ENCODE measurements at regions of chr11 and their contacts with region 1.

Region 1: DNA sequence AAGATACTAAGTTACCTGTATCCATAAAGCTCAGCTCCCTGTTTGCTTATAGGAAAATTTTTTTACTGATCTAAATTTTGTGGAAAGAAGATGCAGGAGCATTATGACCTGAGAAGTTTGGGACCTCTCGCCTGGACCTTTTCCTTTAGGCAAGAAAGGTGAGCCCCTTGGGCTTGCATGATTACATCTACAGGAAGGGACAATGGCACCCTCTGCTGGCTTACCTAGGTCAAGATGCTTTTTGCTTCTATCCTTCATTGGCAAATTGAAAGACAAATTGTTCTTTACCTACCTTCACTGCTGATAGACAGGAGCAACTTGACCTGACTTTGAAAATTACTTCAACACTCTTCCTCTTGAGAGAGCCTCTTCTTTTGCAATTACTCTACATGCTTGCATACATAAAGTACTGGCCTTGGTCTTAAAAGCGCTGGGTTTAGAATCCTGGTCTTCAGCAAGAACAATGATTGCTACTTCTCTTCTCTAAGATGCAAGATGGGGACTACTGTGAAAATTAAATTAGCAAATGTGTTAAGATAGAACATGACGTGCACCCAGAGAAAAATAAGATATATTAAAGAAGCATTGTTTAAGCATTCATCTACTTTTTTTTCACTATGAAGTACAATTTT is 147.2 kb downstream of the TRPC6 start:
- DNase-seq: no peak
- ATAC-seq: no peak

Region 2: DNA sequence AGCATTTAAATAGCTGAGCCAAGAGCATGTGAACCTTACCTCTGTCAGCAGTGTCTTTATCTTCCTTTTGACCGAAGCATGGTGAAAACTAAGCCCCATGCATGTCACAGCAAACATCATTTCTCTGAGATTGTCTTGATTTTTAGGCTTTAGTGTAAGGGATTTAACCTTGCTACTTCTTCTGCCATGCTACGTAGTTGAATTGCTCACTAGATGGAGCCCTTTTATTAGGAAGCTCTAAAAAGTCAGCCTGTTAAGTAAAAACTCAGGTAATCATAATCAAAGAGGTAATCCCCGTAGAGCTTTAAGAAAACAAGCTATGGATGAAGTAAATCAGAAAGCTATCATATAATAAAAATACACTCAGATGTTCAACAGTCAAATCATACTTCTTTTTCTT is 456.5 kb before region 1 on chr11:
- intact Hi-C with region 1: loop called (anchors 5 kb)
- DNase-seq: no peak
- ATAC-seq: no peak

Region 3: DNA sequence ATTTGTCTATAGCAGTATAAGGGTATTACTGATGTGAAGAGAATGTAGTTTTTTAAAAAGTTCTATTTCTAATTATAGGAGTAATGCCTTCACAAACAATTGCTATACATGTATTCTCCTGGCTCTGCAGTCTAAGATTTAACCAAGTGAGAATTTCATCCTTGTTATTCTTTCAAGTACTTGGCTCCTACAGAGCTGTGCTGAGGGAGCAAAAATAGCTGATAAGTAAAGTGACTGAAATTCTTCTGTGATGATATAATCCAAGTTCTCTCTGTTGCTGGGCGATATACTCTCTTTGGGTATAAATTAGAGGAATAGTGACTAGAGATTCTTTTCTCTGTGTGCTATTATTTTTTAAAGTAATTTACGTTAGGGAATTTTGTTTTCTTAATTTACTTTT is 375.0 kb before region 1 on chr11:
- intact Hi-C with region 1: no loop called
- DNase-seq: no peak
- ATAC-seq: peak; percentile 88

Measured in Right ventricle myocardium inferior (tissue), 1 donor.